Sigmoid colon (tissue), 7 donors: ENCODE measurements at regions of chr7 and their contacts with region 1.

Region 1: GRCh38 chr7:149460493-149461277 is at the start of gene ZNF777:
- DNase-seq: peak; percentile 92
- H3K4me3 ChIP-seq: peak within 1 kb of the TSS; percentile 46 to 72 (median 62)
- H3K27ac ChIP-seq: peak within 1 kb of the TSS; percentile 80 to 86 (median 84)
- H3K4me1 ChIP-seq: peaks cover 0 to 26% (median 22%) of the 10 kb centered on the region in 4 donors
- H3K27me3 ChIP-seq: no peaks in the 10 kb centered on the region
- CTCF ChIP-seq: peak; percentile 10 to 39 (median 32)
- EP300 ChIP-seq: no peak
- POLR2A ChIP-seq: no peak
- total RNA-seq, gene ZNF777: 5.7 to 7.7 (median 6.6) TPM

Region 2: GRCh38 chr7:149422129-149422913 is 38.4 kb before region 1 on chr7:
- intact Hi-C with region 1: loop called (anchors 2 kb)
- DNase-seq: no peak
- H3K4me3 ChIP-seq: peak overlapping the region; percentile 29 to 52 (median 46)
- H3K27ac ChIP-seq: peak overlapping the region in 3 of 4 donors; percentile 5 to 27 (median 21)
- H3K4me1 ChIP-seq: peaks cover 0 to 16% (median 12%) of the 10 kb centered on the region in 4 donors
- H3K27me3 ChIP-seq: peaks cover 0 to 11% (median 0%) of the 10 kb centered on the region in 3 donors
- CTCF ChIP-seq: peak in 1 of 4 experiments; percentile 36
- EP300 ChIP-seq: no peak
- POLR2A ChIP-seq: no peak